Thyroid gland (tissue), 4 donors: ENCODE measurements at regions of chr2 and their contacts with region 1.

Region 1: DNA sequence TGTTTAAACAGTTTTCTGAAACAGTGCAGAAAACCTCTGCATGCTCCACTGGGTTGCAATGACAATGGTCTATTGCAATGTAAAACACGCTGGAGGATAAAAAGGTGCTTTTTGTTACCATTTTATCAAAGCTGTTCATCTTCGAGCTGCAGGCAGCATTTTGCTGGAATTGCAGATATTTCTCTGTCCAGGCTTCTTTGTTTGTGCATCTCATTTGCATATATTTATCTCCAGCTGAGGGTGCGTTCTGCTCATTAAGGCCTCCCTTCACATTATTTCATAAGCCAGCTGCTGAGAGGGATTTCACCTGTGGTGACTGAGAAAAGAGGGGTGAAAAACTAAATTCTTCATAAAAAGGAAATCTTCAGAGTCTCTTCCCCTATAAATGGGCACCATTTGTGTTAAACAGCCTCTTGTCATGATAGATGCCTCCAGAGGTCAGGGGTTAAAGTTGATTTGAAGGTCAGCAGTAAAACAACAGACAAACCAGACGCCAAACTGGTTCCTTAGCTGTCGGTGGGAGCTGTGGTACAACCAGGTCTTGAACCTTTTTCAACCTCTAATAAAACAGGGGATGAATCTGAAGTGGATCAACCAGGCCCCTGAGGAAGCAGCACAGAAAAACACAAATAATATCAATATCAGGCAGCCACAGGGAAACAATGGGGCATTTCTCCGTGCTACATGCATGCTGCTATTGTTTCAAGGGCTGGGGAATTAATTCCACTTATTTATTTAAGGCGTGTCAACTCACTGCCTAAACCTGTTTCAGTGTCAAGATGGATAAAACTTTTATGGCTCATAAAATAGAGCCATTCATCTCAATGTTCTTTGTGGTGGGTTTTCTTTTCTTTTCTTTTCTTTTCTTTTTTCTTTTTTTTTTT is 265.1 kb downstream of the MEIS1 start:
- DNase-seq: no peak
- H3K4me3 ChIP-seq: no peak overlapping the region
- H3K27ac ChIP-seq: no peak overlapping the region
- H3K4me1 ChIP-seq: no peaks in the 10 kb centered on the region
- H3K27me3 ChIP-seq: no peaks in the 10 kb centered on the region
- CTCF ChIP-seq: no peak
- POLR2A ChIP-seq: no peak

Region 2: DNA sequence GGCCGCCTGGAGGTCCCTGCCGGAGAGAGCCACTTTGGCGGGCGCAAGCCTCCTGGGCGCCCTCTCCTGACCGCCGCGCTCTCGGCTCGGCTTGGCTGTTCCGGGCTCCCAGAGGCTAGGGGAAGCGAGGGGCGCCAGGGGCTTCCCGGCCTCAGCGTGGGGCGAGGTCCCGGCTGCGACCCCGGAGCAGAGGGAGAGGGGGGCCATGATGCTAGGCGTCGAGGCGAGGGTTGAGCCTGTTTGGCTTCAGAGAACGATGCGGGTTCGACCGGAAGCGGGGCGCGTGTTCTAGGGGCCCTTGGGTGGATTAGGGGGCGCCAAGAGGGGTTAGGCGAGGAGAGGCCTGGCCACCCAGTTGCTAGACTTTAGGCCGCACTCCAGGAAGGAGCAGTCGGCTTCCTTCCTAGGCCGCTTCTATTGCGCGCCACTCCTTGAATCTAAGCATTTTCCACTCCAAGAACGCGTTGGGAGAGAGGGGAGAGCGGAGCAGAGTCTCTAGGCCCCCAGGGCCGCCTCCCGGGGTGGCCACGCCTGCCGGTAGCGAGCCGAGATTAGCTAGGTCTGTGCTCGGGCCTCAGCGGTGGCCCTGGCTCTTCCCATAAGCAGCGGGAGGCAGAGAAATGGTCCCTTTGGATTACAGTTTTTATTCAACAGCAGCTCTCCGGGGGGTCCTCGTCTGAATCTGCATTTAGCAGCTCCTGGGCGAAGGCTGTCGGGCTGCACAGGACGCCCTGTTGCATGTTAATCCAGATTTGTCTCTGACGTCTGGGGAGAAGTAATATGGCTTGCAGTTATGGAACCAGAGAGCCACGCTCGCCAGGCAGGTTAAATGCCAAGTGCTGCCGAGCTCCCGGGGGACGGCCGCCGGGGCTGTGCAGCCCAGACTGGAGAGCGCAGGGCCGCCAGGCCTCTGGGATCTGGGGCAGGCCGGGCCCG is 253.8 kb before region 1 on chr2:
- intact Hi-C with region 1: loop called (anchors 10 kb)
- DNase-seq: peak in 1 of 2 donors; percentile 14
- H3K4me3 ChIP-seq: peak overlapping the region in 2 of 3 donors; percentile 13 to 26
- H3K27ac ChIP-seq: peak overlapping the region; percentile 59 to 73 (median 69)
- H3K4me1 ChIP-seq: peaks cover 0 to 13% of the 10 kb centered on the region in 2 donors
- H3K27me3 ChIP-seq: no peaks in the 10 kb centered on the region
- CTCF ChIP-seq: peak in 1 of 6 experiments; percentile 27
- POLR2A ChIP-seq: no peak

Region 3: GRCh38 chr2:66729416-66730300 is 29.6 kb after region 1 on chr2:
- intact Hi-C with region 1: no loop called
- DNase-seq: no peak
- H3K4me3 ChIP-seq: no peak overlapping the region
- H3K27ac ChIP-seq: no peak overlapping the region
- H3K4me1 ChIP-seq: no peaks in the 10 kb centered on the region
- H3K27me3 ChIP-seq: no peaks in the 10 kb centered on the region
- CTCF ChIP-seq: no peak
- POLR2A ChIP-seq: no peak

Region 4: GRCh38 chr2:66748939-66749338 is 48.9 kb after region 1 on chr2:
- intact Hi-C with region 1: no loop called
- DNase-seq: no peak
- H3K4me3 ChIP-seq: no peak overlapping the region
- H3K27ac ChIP-seq: no peak overlapping the region
- H3K4me1 ChIP-seq: no peaks in the 10 kb centered on the region
- H3K27me3 ChIP-seq: no peaks in the 10 kb centered on the region
- CTCF ChIP-seq: no peak
- POLR2A ChIP-seq: no peak